ENCODE measurements at regions of chr22 and their contacts with region 1.

Region 1: DNA sequence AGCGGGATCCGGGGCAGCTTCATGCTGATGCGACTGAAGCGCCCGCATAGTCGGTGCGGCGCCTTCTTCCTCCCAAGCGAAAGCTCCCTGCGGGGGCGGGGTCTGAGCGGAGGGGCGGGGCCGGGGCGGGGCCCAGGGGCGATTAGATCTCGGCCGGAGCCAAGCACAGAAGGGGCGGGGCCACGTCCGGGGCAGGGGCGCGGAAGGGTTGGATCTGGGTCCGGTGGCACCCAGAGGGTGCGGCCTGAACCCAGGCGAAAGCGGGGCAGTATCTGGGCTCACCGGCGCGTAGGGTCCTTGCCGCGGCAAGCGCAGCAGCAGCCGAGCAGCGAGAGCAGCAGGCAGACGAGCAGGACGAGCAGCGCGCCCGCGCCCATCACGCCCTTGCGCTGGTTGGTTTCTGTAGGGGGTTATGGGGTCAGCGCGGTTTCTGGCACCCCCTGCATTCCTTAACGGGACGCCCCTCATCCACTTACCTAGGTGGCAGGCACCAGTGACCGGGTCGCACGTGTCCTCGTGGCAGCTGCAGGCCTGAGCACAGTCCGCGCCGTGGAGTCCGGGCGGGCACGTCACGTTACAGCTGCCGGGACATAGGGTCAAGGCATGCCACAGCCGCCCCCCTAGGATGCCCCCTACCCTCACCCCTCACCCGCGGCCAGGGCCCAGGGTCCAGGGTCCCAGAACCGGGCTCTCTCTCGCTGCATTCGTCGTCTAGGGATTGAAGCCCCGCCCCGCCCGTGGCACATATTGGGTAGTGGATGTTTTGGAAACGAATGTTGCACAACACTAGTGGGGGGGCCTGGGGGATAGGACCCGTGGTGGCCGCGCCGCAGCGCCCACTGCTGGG is 8.1 kb downstream of the SCARF2 start:
- DNase-seq: peak; percentile 78
- H3K4me3 Mint-ChIP-seq: peak overlapping the region; percentile 73
- H3K27ac Mint-ChIP-seq: no peak overlapping the region
- H3K4me1 Mint-ChIP-seq: peaks cover 5% of the 10 kb centered on the region
- H3K27me3 Mint-ChIP-seq: peaks cover 57% of the 10 kb centered on the region

Region 2: GRCh38 chr22:20568989-20569769 is 139.7 kb after region 1 on chr22:
- intact Hi-C with region 1: loop called (anchors 10 kb)
- DNase-seq: peak; percentile 78
- H3K4me3 Mint-ChIP-seq: no peak overlapping the region
- H3K27ac Mint-ChIP-seq: peak overlapping the region; percentile 68
- H3K4me1 Mint-ChIP-seq: peaks cover 57% of the 10 kb centered on the region
- H3K27me3 Mint-ChIP-seq: no peaks in the 10 kb centered on the region